ENCODE measurements at regions of chr15 and their contacts with region 1.

Region 1: GRCh38 chr15:29962407-29962806 is 120.3 kb upstream of the GOLGA8J start:
- DNase-seq: no peak
- H3K4me3 ChIP-seq: peak overlapping the region in 1 of 4 experiments; percentile 12; a peak in 1 of 8 replicates
- H3K27ac ChIP-seq: no peak overlapping the region
- H3K4me1 ChIP-seq: peaks cover 0 to 10% (median 2%) of the 10 kb centered on the region in 4 experiments; a peak in 5 of 7 replicates
- H3K27me3 ChIP-seq: peaks cover 2 to 7% (median 3%) of the 10 kb centered on the region in 4 experiments; a peak in 6 of 7 replicates
- CTCF ChIP-seq: no peak
- EP300 ChIP-seq: no peak
- POLR2A ChIP-seq: no peak
- RAD21 ChIP-seq: no peak

Region 2: GRCh38 chr15:29942143-29942542 is 20.3 kb before region 1 on chr15:
- CTCF ChIA-PET with region 1: interaction called, 15 read pairs
- POLR2A ChIA-PET with region 1: no interaction called
- DNase-seq: no peak
- H3K4me3 ChIP-seq: no peak overlapping the region
- H3K27ac ChIP-seq: no peak overlapping the region
- H3K4me1 ChIP-seq: no peaks in the 10 kb centered on the region
- H3K27me3 ChIP-seq: no peaks in the 10 kb centered on the region
- CTCF ChIP-seq: peak in 2 of 3 experiments; percentile 53 to 56; a peak in 3 of 4 replicates
- EP300 ChIP-seq: no peak
- POLR2A ChIP-seq: no peak
- RAD21 ChIP-seq: peak; percentile 64 to 72

Region 3: GRCh38 chr15:30065025-30065801 is 102.8 kb after region 1 on chr15:
- CTCF ChIA-PET with region 1: no interaction called
- POLR2A ChIA-PET with region 1: no interaction called
- DNase-seq: no peak
- H3K4me3 ChIP-seq: no peak overlapping the region
- H3K27ac ChIP-seq: no peak overlapping the region
- H3K4me1 ChIP-seq: no peaks in the 10 kb centered on the region
- H3K27me3 ChIP-seq: no peaks in the 10 kb centered on the region
- CTCF ChIP-seq: no peak
- EP300 ChIP-seq: no peak
- POLR2A ChIP-seq: no peak
- RAD21 ChIP-seq: no peak

Measured in H1 (cell line).